T-cell (primary cell): ENCODE measurements at regions of chr7 and their contacts with region 1.

Region 1: DNA sequence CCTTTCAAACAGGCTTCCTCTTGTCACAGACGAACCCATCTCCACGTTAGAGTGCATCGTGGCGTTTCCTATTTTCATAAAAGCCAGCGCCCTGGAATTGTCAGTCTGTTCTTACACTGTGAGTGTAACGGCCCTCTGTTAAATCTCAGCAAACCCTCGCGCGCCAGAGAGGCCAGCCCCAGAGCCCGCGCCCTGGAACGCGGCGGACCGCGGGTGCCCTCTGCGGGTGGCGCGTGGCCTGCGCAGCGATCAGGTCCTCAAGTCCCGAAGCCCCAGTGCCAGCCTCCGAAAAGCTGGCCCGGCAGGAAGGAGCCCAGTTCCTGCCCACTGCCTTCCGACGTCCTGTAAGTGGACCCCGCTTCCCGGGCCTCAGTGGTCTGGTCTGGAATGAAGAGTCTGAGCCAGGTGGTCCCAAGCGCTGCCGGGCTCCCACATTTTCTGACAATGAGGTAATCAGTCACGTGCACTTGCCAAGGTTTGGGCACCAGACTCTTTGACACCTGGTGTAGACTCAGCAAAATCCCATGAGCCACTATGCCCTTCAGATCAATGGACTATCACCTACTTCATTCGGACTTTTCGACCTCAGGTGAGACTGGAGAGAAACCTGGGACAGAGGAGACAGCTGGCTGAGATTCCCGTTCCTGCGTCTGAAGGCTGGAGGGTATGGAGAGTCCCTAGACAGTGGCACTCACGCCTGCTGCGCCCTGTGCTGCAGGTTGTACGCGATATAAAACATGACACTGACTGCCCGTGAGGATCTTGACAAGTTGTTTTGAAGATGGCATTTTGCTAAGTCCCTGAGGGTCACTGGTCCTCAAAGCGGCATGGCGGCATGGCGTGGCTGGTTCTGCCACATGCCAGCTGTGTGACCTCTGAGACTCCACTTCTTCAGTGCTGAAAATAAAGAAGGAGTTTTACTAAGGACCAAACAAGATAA is 109.4 kb upstream of the LANCL2 start:
- DNase-seq: peak in 33 of 35 experiments; percentile 29 to 79 (median 53)
- ATAC-seq: peak; percentile 85 to 94 (median 90)
- H3K4me3 ChIP-seq: peak overlapping the region; percentile 45 to 62
- H3K4me3 Mint-ChIP-seq: peak overlapping the region; percentile 83 to 94 (median 86)
- H3K27ac ChIP-seq: no peak overlapping the region
- H3K27ac Mint-ChIP-seq: no peak overlapping the region
- H3K4me1 ChIP-seq: peaks cover 3 to 17% of the 10 kb centered on the region in 2 experiments
- H3K4me1 Mint-ChIP-seq: peaks cover 7 to 13% (median 7%) of the 10 kb centered on the region in 3 donors
- H3K27me3 ChIP-seq: peaks cover 17 to 35% of the 10 kb centered on the region in 2 experiments
- H3K27me3 Mint-ChIP-seq: peaks cover 44 to 55% of the 10 kb centered on the region in 2 donors

Region 2: GRCh38 chr7:54758702-54759592 is 496.8 kb before region 1 on chr7 and contains the start of gene SEC61G:
- CTCF ChIA-PET with region 1: interaction called in 1 of 2 experiments, 12 read pairs
- POLR2A ChIA-PET with region 1: no interaction called
- DNase-seq: peak; percentile 86 to 98 (median 92)
- ATAC-seq: peak; percentile 96 to 98 (median 97)
- H3K4me3 ChIP-seq: peak within 1 kb of the TSS; percentile 77 to 80
- H3K4me3 Mint-ChIP-seq: peak within 1 kb of the TSS; percentile 96 to 100 (median 97)
- H3K27ac ChIP-seq: peak within 1 kb of the TSS; percentile 84
- H3K27ac Mint-ChIP-seq: peak within 1 kb of the TSS; percentile 94 to 96
- H3K4me1 ChIP-seq: peaks cover 13% of the 10 kb centered on the region in 2 experiments
- H3K4me1 Mint-ChIP-seq: peaks cover 33 to 40% (median 38%) of the 10 kb centered on the region in 3 donors
- H3K27me3 ChIP-seq: no peaks in the 10 kb centered on the region
- H3K27me3 Mint-ChIP-seq: peaks cover 0 to 5% of the 10 kb centered on the region in 2 donors
- total RNA-seq, gene SEC61G: 42.7 to 65.1 (median 62.1) TPM